K562 (cell line): ENCODE measurements at regions of chr10 and their contacts with region 1.

Region 1: DNA sequence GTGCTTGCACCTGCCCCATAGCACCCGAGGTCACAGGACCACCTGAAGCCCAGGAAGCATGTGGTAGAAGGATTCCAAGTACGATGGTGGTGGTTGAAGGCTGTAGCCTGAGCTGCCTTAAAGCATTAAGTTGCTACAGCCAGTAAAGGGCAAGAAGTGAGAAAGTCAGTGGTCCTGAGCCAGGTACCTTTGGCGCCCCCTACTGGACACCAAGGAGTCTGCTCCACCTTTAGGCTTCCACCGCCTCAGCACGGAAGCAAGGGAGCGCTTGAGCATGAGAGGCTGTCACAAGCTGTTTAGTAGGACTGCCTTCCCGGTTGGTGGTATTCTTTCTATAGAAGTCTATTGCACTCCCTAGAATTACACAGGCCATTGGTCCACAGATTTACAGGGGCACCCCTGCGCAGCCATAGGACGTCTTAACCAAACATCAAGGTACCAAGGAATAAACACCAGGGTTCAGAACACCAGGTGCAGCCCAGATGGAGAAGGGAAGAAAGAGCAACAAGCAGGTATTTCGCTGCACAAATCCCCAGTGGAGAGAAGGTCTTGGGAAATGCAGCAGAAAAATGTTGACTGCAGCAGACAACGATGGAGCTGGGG is 2.2 kb downstream of the CRTAC1 start:
- DNase-seq: peak; percentile 71 to 80 (median 76)
- ATAC-seq: peak; percentile 95
- H3K4me3 ChIP-seq: no peak overlapping the region
- H3K27ac ChIP-seq: no peak overlapping the region
- H3K4me1 ChIP-seq: no peaks in the 10 kb centered on the region; a peak in 1 of 5 replicates
- H3K27me3 ChIP-seq: peaks cover 0 to 30% of the 10 kb centered on the region in 2 experiments; a peak in 2 of 5 replicates
- CTCF ChIP-seq: peak; percentile 78 to 87 (median 84)
- EP300 ChIP-seq: no peak
- POLR2A ChIP-seq: no peak
- RAD21 ChIP-seq: peak; percentile 38 to 69; a peak in 3 of 4 replicates

Region 2: GRCh38 chr10:97612386-97612785 is 415.9 kb before region 1 on chr10:
- CTCF ChIA-PET with region 1: no interaction called
- POLR2A ChIA-PET with region 1: no interaction called
- in situ Hi-C with region 1: no loop called
- intact Hi-C with region 1: no loop called
- DNase-seq: peak; percentile 37 to 49 (median 41)
- ATAC-seq: peak; percentile 92
- H3K4me3 ChIP-seq: no peak overlapping the region
- H3K27ac ChIP-seq: no peak overlapping the region
- H3K4me1 ChIP-seq: peaks cover 0 to 5% of the 10 kb centered on the region in 2 experiments; a peak in 2 of 5 replicates
- H3K27me3 ChIP-seq: no peaks in the 10 kb centered on the region
- CTCF ChIP-seq: peak; percentile 46 to 65 (median 53); a peak in 4 of 6 replicates
- EP300 ChIP-seq: no peak
- POLR2A ChIP-seq: no peak
- RAD21 ChIP-seq: peak; percentile 48 to 66

Region 3: DNA sequence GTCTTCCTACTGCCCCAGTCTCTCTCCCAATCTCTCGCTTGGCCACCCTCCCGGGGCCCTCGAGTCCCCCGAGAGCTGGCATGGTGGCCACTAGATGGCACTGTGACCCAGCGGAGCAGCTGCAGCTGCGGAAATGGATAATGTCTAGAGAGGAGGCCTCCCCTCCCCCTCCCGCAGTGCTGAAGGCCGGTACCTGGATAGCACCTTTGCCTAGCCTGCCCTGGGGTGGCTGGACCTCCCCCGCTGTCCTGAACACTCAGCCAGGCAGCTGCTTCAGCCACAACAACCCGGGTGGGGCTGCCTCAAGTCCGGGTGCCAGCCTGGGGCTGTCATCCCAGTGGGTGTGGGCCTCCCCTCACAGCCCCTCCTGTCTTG is 113.4 kb before region 1 on chr10:
- CTCF ChIA-PET with region 1: interaction called, 3 read pairs
- POLR2A ChIA-PET with region 1: no interaction called
- in situ Hi-C with region 1: no loop called
- intact Hi-C with region 1: loop called (anchors 1 kb)
- DNase-seq: peak; percentile 76 to 81 (median 78)
- ATAC-seq: peak; percentile 99
- H3K4me3 ChIP-seq: no peak overlapping the region
- H3K27ac ChIP-seq: no peak overlapping the region
- H3K4me1 ChIP-seq: peaks cover 0 to 8% of the 10 kb centered on the region in 2 experiments; a peak in 2 of 5 replicates
- H3K27me3 ChIP-seq: peaks cover 0 to 18% of the 10 kb centered on the region in 2 experiments; a peak in 2 of 5 replicates
- CTCF ChIP-seq: peak; percentile 77 to 88 (median 85)
- EP300 ChIP-seq: no peak
- POLR2A ChIP-seq: no peak
- RAD21 ChIP-seq: peak; percentile 79 to 89